AG04449 (cell line): ENCODE measurements at regions of chr14 and their contacts with region 1.

Region 1: GRCh38 chr14:49867831-49868723 is 15.5 kb upstream of the NEMF start:
- DNase-seq: no peak
- H3K4me3 ChIP-seq: peak overlapping the region; percentile 71
- CTCF ChIP-seq: no peak

Region 2: DNA sequence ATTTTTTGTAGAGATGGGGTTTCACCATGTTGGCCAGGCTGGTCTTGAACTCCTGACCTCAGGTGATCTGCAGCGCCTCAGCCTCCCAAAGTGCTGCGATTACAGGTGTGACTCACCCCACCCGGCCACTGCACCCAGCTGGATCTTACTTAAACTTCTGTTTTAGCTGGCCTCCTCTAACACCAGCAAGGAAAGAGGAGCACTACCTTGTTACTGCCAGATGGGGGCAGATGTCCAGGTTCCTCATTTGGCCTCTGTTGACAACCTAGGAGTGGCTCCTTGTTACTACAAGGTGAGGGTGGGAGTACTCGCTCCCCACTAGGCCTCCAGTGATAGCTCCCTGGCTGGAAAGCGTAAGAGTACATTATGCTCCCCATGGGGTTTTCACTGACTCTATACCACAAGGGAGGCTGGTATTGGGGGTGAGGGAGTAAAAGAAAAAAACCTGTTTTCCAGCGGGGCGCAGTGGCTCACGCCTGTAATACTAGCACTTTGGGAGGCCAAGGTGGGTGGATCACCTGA is 11.7 kb after region 1 on chr14:
- CTCF ChIA-PET with region 1: interaction called, 29 read pairs
- POLR2A ChIA-PET with region 1: interaction called, 3 read pairs
- DNase-seq: no peak
- H3K4me3 ChIP-seq: no peak overlapping the region
- CTCF ChIP-seq: peak; percentile 65

Region 3: DNA sequence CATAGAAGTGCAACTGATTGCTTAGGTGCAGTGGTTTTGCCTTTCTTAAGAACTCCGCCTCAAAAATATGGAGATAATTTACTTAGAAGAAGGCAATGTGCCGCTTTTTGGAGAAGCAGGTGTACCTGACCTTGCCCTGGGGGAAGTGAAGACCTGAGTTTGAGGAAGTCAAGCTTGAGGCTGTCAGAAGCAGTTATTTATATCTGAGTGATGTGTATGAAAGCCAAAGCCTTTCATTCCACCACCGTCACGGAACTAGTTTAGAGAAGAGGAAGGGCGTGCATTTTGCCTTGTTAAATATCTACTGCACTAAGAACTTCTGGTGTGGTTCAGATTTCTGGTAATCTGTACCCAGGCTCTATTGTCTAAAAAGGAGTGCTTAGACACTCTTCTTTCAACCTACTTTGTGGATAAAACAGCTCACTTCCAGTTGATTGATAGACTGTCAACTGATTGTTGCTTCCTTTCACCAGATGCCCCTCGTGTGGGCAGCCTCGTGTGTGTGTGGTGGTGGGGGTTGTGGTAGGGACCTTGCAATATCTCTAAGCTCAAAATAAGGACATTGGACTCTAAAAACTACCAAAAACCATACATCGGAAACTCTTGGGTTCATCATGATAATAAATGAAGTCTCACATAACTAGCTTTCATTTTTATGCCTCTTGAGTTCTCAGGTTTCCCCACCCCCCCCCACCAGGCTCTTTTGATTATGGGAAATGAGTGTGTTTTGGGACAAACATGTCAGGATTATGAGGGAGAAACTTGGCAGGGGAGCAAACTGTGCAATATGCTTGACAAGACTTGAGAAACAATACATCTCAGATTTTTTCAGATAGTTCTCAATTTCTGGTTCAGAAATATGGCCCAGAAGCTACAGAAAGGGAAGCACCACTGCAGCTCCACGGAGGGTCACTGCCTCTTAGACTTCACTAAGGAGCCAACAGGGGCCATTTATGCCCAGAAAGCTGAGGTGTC is 103.4 kb after region 1 on chr14:
- CTCF ChIA-PET with region 1: interaction called, 13 read pairs
- POLR2A ChIA-PET with region 1: interaction called, 3 read pairs
- DNase-seq: no peak
- H3K4me3 ChIP-seq: no peak overlapping the region
- CTCF ChIP-seq: no peak

Region 4: GRCh38 chr14:49992901-49993335 is 124.8 kb after region 1 on chr14:
- CTCF ChIA-PET with region 1: interaction called, 10 read pairs
- POLR2A ChIA-PET with region 1: no interaction called
- DNase-seq: no peak
- H3K4me3 ChIP-seq: no peak overlapping the region
- CTCF ChIP-seq: no peak

Region 5: DNA sequence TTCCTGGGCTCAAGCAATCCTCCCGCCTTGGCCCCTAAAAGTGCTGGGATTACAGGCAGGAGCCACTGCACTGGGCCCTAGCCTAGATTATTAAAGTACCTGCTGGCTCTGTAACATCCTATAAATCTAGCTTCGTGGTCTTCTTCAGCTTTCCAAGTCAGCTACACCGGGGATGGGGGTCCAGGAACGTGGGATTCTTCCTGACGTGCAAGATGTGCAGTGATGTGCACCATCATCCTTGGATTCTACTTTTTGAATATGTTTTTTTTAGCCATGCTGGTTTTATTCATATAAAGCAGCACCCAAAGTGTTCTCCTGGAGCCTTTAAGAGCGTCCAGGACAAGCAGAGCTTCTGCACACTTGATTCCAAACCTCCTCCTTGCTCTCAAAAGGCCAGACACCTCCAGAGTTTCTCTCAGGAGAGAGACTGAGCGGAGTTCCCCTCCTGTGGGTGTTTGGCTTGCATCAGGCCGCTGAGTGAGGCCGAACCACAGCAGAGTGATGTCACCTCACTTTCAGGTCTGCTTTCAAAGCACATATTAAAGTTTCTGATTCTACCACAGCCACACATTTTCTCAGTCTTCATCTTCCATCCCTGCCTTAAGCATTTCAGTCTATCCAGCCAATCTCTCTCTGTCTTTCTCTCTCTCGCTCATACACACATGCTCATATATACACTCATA is 214.8 kb after region 1 on chr14:
- CTCF ChIA-PET with region 1: interaction called, 60 read pairs
- POLR2A ChIA-PET with region 1: no interaction called
- DNase-seq: no peak
- H3K4me3 ChIP-seq: no peak overlapping the region
- CTCF ChIP-seq: no peak

Region 6: GRCh38 chr14:50099335-50099734 is 231.3 kb after region 1 on chr14:
- CTCF ChIA-PET with region 1: interaction called, 368 read pairs
- POLR2A ChIA-PET with region 1: no interaction called
- DNase-seq: no peak
- H3K4me3 ChIP-seq: no peak overlapping the region
- CTCF ChIP-seq: no peak